ENCODE measurements at regions of chr3 and their contacts with region 1.

Region 1: GRCh38 chr3:151468284-151468917 is 7.5 kb upstream of the IGSF10 start:
- DNase-seq: peak; percentile 36 to 74
- ATAC-seq: peak; percentile 87 to 98
- H3K4me3 ChIP-seq: no peak overlapping the region
- H3K27ac ChIP-seq: peak overlapping the region in 1 of 2 experiments; percentile 22; a peak in 1 of 6 replicates
- H3K4me1 ChIP-seq: no peaks in the 10 kb centered on the region
- CTCF ChIP-seq: peak; percentile 85
- EP300 ChIP-seq: no peak
- POLR2A ChIP-seq: no peak
- RAD21 ChIP-seq: peak; percentile 71 to 76

Region 2: GRCh38 chr3:151404316-151404715 is 64.1 kb before region 1 on chr3:
- CTCF ChIA-PET with region 1: no interaction called
- POLR2A ChIA-PET with region 1: no interaction called
- DNase-seq: no peak
- ATAC-seq: no peak
- H3K4me3 ChIP-seq: no peak overlapping the region
- H3K27ac ChIP-seq: no peak overlapping the region
- H3K4me1 ChIP-seq: no peaks in the 10 kb centered on the region
- CTCF ChIP-seq: no peak
- EP300 ChIP-seq: no peak
- POLR2A ChIP-seq: no peak
- RAD21 ChIP-seq: no peak

Region 3: GRCh38 chr3:151445273-151446001 is 23.0 kb before region 1 on chr3:
- CTCF ChIA-PET with region 1: interaction called, 22 read pairs
- POLR2A ChIA-PET with region 1: no interaction called
- DNase-seq: no peak
- ATAC-seq: no peak
- H3K4me3 ChIP-seq: no peak overlapping the region
- H3K27ac ChIP-seq: no peak overlapping the region
- H3K4me1 ChIP-seq: no peaks in the 10 kb centered on the region
- CTCF ChIP-seq: no peak
- EP300 ChIP-seq: no peak
- POLR2A ChIP-seq: no peak
- RAD21 ChIP-seq: no peak

Region 4: GRCh38 chr3:151483961-151484520 is 15.6 kb after region 1 on chr3:
- CTCF ChIA-PET with region 1: interaction called, 23 read pairs
- POLR2A ChIA-PET with region 1: no interaction called
- DNase-seq: no peak
- ATAC-seq: no peak
- H3K4me3 ChIP-seq: no peak overlapping the region
- H3K27ac ChIP-seq: no peak overlapping the region
- H3K4me1 ChIP-seq: no peaks in the 10 kb centered on the region
- CTCF ChIP-seq: no peak
- EP300 ChIP-seq: no peak
- POLR2A ChIP-seq: no peak
- RAD21 ChIP-seq: no peak

Region 5: DNA sequence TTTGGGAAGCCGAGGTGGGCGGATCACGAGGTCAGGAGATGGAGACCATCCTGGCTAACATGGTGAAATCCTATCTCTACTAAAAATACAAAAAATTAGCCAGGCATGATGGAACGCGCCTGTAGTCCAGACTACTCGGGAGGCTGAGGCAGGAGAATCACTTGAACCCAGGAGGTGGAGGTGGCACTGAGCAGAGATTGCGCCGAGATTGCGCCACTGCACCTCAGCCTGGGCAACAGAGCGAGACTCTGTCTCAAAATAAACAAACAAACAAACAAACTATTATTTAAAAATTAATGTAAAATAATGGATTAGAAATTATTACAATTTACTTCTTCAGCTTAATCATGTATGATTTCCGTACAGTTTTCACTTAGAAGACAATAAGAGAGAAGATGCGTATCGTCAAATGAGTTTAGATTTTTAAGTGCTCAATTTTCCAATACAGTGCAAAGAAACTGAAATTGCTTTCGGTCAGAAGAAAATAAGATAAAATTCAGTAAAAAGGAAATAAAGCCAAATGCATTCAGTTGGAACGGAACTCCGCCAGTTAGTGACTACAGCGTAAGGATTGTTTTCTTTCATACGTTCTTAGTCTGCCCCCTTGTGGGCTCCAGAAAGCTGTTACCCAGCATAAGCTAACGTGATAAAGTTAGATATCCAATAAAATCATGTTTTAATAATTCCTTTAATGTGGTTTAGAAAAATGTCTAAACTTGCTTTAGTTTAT is 370.3 kb after region 1 on chr3:
- CTCF ChIA-PET with region 1: interaction called, 50 read pairs
- POLR2A ChIA-PET with region 1: no interaction called
- DNase-seq: peak; percentile 27 to 89
- ATAC-seq: peak; percentile 61 to 82; a peak in 4 of 6 replicates
- H3K4me3 ChIP-seq: no peak overlapping the region
- H3K27ac ChIP-seq: peak overlapping the region; percentile 82 to 88
- H3K4me1 ChIP-seq: peaks cover 52% of the 10 kb centered on the region
- CTCF ChIP-seq: peak; percentile 82
- EP300 ChIP-seq: no peak
- POLR2A ChIP-seq: no peak
- RAD21 ChIP-seq: peak; percentile 94

Measured in A549 (cell line).